HAP-1 (cell line): ENCODE measurements at regions of chr15 and their contacts with region 1.

Region 1: GRCh38 chr15:80970018-80970658 is 19.5 kb downstream of the MESD start:
- DNase-seq: peak; percentile 84 to 88
- H3K4me3 ChIP-seq: no peak overlapping the region
- H3K4me1 ChIP-seq: peaks cover 4% of the 10 kb centered on the region; the same call in 1 of the 2 replicates
- H3K27me3 ChIP-seq: no peaks in the 10 kb centered on the region

Region 2: DNA sequence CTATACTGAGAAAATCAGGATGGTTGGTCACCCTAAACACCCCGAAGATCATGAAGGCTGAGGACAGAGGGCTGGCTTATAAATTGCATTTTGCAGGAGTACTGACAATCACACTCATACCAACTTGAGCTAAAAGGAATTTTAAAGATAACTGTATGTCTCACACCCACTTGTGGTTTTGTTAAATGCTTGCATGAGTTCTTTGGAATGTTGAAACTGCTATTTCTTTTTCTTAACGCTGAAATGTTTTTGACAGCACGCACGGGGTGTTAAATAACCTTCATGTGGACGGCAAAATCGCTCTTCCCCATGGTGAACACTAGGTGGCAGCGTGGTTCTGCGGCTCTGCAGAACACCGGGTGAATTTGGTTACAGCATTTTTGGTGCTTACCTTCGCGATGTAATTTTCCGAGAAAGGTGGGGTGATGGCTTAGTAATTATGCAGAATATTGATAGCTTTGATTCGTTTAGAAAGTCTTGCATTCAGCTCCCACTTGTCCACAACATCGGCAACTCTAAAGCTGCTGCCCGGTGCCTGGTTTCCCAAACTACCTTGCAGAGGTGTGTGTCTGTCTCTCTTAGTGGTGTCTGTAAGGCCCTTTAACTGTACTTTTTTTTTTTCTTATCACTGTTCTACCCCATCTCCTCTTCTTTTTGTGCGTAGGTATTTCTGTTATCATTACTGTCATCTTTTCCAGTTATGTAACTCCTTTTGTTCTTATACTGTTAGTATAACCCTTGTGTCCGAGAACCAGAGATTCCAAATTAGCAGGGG is 514.3 kb before region 1 on chr15:
- in situ Hi-C with region 1: loop called (anchors 5 kb)
- DNase-seq: peak; percentile 80 to 81
- H3K4me3 ChIP-seq: no peak overlapping the region
- H3K4me1 ChIP-seq: peaks cover 2% of the 10 kb centered on the region; the same call in 1 of the 2 replicates
- H3K27me3 ChIP-seq: no peaks in the 10 kb centered on the region

Region 3: GRCh38 chr15:80567721-80568157 is 402.4 kb before region 1 on chr15:
- in situ Hi-C with region 1: loop called (anchors 10 kb)
- DNase-seq: peak; percentile 86 to 87
- H3K4me3 ChIP-seq: no peak overlapping the region
- H3K4me1 ChIP-seq: no peaks in the 10 kb centered on the region
- H3K27me3 ChIP-seq: no peaks in the 10 kb centered on the region

Region 4: GRCh38 chr15:80743187-80743833 is 226.8 kb before region 1 on chr15:
- in situ Hi-C with region 1: no loop called
- DNase-seq: peak in 1 of 2 experiments; percentile 44
- H3K4me3 ChIP-seq: no peak overlapping the region
- H3K4me1 ChIP-seq: peaks cover 21% of the 10 kb centered on the region
- H3K27me3 ChIP-seq: no peaks in the 10 kb centered on the region

Region 5: GRCh38 chr15:80861731-80862170 is 108.4 kb before region 1 on chr15:
- in situ Hi-C with region 1: no loop called
- DNase-seq: no peak
- H3K4me3 ChIP-seq: no peak overlapping the region
- H3K4me1 ChIP-seq: no peaks in the 10 kb centered on the region
- H3K27me3 ChIP-seq: peaks cover 47% of the 10 kb centered on the region